Mammary epithelial cell (primary cell): ENCODE measurements at regions of chr10 and their contacts with region 1.

Region 1: DNA sequence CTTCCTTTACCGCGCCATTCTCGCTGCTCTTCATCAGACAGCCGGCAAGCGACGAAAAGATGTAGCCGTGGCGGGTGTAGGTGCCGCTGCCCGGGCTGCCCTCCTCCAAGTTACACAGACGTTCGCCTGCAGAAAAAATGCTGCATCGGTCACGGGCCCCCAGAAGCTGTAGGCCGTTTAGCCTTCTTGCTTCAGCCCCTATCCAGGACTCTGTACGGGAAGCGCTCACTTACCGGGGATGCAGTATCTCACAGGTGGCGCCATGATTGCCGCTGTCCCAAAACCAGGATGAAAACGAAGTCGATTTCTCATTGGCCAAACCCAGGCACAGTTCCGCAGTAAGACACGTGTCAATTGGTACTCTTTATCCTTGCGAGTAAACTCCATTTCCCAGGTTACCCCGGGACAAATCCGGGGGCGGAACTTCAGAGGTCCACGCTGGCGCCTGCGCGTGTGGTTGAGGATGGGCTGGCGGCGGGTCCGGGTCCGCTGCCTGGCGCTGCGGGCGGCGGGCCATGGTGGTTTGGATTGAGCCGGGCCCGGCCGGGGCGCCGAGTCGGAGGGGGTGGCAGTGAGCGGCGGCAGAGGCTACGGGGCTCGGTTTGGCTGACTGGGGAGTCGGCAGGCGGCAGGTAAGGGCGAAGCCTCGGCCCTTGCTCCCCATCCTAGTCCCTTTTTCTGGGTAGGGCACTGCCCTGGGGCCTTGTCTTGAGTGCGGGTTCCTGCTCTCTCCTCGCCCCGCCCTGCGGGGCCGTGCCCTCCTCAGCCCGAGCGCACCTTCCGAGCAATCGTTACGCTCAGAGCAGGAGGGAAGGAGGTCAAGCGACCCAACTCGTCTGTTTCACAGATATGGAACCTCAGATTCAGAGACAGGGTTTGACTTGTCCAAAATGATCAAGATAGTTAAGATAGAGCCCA is at the starts of genes EXOSC1 and ZDHHC16:
- DNase-seq: peak; percentile 96
- H3K4me3 ChIP-seq: peak within 1 kb of the TSS; percentile 68 to 82 (median 72)
- H3K27ac ChIP-seq: peak within 1 kb of the TSS; percentile 47
- H3K4me1 ChIP-seq: peaks cover 26% of the 10 kb centered on the region
- H3K27me3 ChIP-seq: no peaks in the 10 kb centered on the region
- CTCF ChIP-seq: peak in 1 of 2 donors; percentile 23
- total RNA-seq, gene EXOSC1: 35.8 to 37.0 TPM
- total RNA-seq, gene ZDHHC16: 46.3 to 61.3 TPM

Region 2: DNA sequence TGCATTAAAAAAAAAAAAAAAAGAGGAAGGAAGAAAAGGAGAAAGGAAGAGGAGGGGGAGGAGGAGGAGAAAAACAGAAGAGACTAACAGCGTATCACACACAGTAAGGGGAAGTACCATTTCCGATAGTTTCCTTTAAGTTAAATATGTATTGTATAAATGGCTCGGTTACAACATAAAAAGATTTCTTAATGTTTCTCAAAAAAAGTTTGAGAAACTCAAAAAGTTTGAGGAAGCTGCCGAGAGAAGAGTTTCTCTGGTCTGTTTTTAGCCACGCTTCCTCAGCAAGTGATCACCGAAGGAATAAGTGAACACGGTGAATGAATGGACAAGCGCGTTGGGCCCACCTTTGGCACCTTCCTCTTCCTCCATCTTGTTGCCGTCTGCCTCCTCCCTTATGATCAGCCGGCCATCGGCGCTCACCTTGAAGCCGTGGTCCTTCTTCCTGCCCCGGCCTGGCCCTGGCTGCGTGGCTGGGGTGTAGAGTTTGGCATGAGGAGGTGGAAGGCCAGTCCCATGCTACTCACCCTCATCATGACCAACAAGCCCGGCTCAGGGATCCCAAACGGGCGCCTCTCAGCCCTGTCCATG is 80.1 kb before region 1 on chr10:
- CTCF ChIA-PET with region 1: no interaction called
- dilution Hi-C with region 1: loop called (anchors 5 kb)
- in situ Hi-C with region 1: no loop called
- intact Hi-C with region 1: no loop called
- DNase-seq: no peak
- H3K4me3 ChIP-seq: no peak overlapping the region
- H3K27ac ChIP-seq: no peak overlapping the region
- H3K4me1 ChIP-seq: no peaks in the 10 kb centered on the region
- H3K27me3 ChIP-seq: no peaks in the 10 kb centered on the region
- CTCF ChIP-seq: no peak

Region 3: GRCh38 chr10:97425964-97426775 is 19.8 kb before region 1 on chr10 and contains the start of gene PGAM1:
- CTCF ChIA-PET with region 1: no interaction called
- dilution Hi-C with region 1: no loop called
- in situ Hi-C with region 1: no loop called
- intact Hi-C with region 1: loop called (anchors 2 kb)
- DNase-seq: peak; percentile 96
- H3K4me3 ChIP-seq: peak within 1 kb of the TSS; percentile 83 to 98 (median 97)
- H3K27ac ChIP-seq: peak within 1 kb of the TSS; percentile 86
- H3K4me1 ChIP-seq: peaks cover 16% of the 10 kb centered on the region
- H3K27me3 ChIP-seq: no peaks in the 10 kb centered on the region
- CTCF ChIP-seq: peak; percentile 61 to 83
- total RNA-seq, gene PGAM1: 380 to 517 TPM

Region 4: GRCh38 chr10:97546456-97547270 is 100.7 kb after region 1 on chr10:
- CTCF ChIA-PET with region 1: no interaction called
- dilution Hi-C with region 1: no loop called
- in situ Hi-C with region 1: no loop called
- intact Hi-C with region 1: no loop called
- DNase-seq: no peak
- H3K4me3 ChIP-seq: no peak overlapping the region
- H3K27ac ChIP-seq: no peak overlapping the region
- H3K4me1 ChIP-seq: peaks cover 56% of the 10 kb centered on the region
- H3K27me3 ChIP-seq: no peaks in the 10 kb centered on the region
- CTCF ChIP-seq: no peak